Prostate gland (tissue), 2 donors: ENCODE measurements at regions of chr17 and their contacts with region 1.

Region 1: GRCh38 chr17:2054512-2055291 is at the start of gene HIC1:
- DNase-seq: peak; percentile 65
- H3K4me3 ChIP-seq: peak within 1 kb of the TSS; percentile 43 to 46
- H3K27ac ChIP-seq: peak within 1 kb of the TSS; percentile 77 to 82
- H3K4me1 ChIP-seq: peaks cover 4% of the 10 kb centered on the region
- H3K27me3 ChIP-seq: no peaks in the 10 kb centered on the region
- CTCF ChIP-seq: peak; percentile 96 to 98 (median 98)
- POLR2A ChIP-seq: peak; percentile 62
- total RNA-seq, gene HIC1: 20.5 to 33.1 TPM

Region 2: DNA sequence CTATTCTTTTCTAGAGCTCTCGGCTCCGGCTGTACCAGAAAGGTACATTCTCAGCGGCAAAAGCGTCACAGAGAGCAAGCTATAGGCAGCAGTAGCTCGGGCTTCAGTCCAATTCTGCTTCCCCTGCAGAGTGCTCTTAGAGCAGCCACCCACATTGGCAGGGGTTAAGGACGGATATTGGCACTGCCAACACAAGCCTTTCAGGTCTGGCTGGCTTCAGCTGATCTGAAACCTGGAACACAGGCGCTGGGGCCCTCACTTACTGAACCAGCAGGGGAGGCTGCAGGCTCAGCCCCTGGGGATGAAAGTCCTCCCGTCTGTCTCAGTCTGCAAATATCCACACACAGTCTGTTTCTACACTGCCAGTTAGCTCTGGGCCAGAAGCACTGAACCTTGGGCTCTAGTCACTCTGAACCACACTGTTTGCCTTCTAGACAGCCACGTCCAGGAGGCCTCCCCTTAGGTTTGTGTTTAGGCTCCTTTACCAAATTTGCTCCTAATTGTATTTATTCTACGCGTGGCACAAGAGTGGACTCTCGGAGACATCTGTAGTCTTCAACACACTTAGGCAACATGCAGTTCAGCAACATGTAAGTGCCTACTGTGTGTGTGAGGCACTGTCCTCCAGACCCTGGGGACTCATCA is 40.3 kb after region 1 on chr17:
- intact Hi-C with region 1: loop called (anchors 5 kb)
- DNase-seq: peak; percentile 92
- H3K4me3 ChIP-seq: no peak overlapping the region
- H3K27ac ChIP-seq: peak overlapping the region; percentile 24 to 28
- H3K4me1 ChIP-seq: peaks cover 5% of the 10 kb centered on the region
- H3K27me3 ChIP-seq: no peaks in the 10 kb centered on the region
- CTCF ChIP-seq: peak; percentile 33 to 96 (median 86)
- POLR2A ChIP-seq: no peak

Region 3: GRCh38 chr17:2244545-2245525 is 190.1 kb after region 1 on chr17:
- intact Hi-C with region 1: loop called (anchors 2 kb)
- DNase-seq: peak; percentile 83
- H3K4me3 ChIP-seq: no peak overlapping the region
- H3K27ac ChIP-seq: peak overlapping the region; percentile 40 to 49
- H3K4me1 ChIP-seq: no peaks in the 10 kb centered on the region
- H3K27me3 ChIP-seq: no peaks in the 10 kb centered on the region
- CTCF ChIP-seq: peak; percentile 94 to 99 (median 98)
- POLR2A ChIP-seq: no peak

Region 4: DNA sequence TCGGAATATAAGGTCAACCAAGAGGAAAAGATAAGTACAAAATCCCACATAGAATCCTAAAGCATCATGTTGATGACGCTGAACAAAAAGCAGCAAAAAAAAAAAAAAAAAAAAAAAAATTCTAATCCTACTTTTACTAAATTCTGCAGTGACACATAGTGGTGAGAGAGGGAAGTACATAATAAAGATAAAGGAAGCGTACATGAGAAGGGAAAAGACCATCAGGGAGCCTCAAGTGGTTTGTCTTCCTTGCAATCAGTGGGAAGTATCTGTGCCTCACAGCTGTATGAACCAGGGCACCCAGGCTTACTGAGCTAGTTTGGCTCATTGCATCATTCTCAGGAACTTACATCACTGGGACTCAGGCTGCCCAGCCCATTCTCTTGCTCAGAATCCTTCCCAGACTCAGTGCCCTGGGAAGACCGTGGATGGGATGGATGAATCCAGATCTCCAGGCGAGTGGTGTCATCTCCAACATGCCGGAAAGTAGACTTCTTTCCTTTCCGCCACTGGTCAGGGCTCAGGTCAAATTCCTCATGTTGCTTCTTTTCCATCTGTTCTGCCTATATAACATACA is 227.7 kb after region 1 on chr17:
- intact Hi-C with region 1: loop called (anchors 2 kb)
- DNase-seq: no peak
- H3K4me3 ChIP-seq: no peak overlapping the region
- H3K27ac ChIP-seq: no peak overlapping the region
- H3K4me1 ChIP-seq: no peaks in the 10 kb centered on the region
- H3K27me3 ChIP-seq: no peaks in the 10 kb centered on the region
- CTCF ChIP-seq: peak in 3 of 4 experiments; percentile 57 to 63 (median 60)
- POLR2A ChIP-seq: no peak

Region 5: DNA sequence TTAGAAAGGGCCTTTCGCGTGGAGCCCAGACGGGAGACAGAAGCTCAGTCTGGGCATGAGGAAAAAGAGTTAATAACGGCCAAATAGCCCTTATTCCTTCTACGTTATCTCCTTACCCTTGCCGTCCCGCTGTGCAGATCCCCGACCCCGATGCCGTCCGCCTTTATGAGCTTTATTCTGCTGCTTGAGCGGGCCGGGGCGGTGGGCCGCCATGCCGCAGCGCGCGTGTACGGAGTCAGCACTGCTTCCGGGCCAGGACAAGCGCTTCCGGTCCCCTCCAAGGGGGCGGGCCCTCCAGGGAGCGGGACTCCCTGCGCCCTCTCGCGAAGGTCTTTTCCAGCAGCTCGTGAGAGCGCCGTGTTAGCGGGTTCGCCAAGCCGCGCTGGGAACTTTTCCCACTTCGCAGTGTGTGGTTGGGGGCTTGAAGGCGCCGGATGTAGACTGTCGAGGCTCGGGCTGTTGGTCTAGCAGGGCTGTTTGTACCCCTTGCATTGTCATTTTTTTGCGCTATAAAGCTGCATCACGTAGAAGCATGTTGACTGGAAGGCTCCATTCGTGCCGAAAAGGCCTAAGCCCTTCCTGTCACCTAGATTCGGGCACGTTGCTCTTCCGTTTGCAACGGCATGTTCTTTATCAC is 281.6 kb after region 1 on chr17 and contains the start of gene TSR1:
- intact Hi-C with region 1: loop called (anchors 2 kb)
- DNase-seq: peak; percentile 89
- H3K4me3 ChIP-seq: peak within 1 kb of the TSS; percentile 71 to 89
- H3K27ac ChIP-seq: peak within 1 kb of the TSS; percentile 84 to 97
- H3K4me1 ChIP-seq: no peaks in the 10 kb centered on the region
- H3K27me3 ChIP-seq: no peaks in the 10 kb centered on the region
- CTCF ChIP-seq: peak; percentile 14 to 66 (median 39)
- POLR2A ChIP-seq: peak; percentile 86
- total RNA-seq, gene TSR1: 34.8 to 42.9 TPM

Region 6: GRCh38 chr17:2399572-2400473 is 345.1 kb after region 1 on chr17:
- intact Hi-C with region 1: loop called (anchors 10 kb)
- DNase-seq: peak; percentile 96
- H3K4me3 ChIP-seq: peak overlapping the region; percentile 92 to 94
- H3K27ac ChIP-seq: peak overlapping the region; percentile 97 to 99
- H3K4me1 ChIP-seq: peaks cover 42% of the 10 kb centered on the region
- H3K27me3 ChIP-seq: no peaks in the 10 kb centered on the region
- CTCF ChIP-seq: peak in 1 of 4 experiments; percentile 12
- POLR2A ChIP-seq: peak; percentile 84